Heart right ventricle (tissue), 16 donors: ENCODE measurements at regions of chr3 and their contacts with region 1.

Region 1: DNA sequence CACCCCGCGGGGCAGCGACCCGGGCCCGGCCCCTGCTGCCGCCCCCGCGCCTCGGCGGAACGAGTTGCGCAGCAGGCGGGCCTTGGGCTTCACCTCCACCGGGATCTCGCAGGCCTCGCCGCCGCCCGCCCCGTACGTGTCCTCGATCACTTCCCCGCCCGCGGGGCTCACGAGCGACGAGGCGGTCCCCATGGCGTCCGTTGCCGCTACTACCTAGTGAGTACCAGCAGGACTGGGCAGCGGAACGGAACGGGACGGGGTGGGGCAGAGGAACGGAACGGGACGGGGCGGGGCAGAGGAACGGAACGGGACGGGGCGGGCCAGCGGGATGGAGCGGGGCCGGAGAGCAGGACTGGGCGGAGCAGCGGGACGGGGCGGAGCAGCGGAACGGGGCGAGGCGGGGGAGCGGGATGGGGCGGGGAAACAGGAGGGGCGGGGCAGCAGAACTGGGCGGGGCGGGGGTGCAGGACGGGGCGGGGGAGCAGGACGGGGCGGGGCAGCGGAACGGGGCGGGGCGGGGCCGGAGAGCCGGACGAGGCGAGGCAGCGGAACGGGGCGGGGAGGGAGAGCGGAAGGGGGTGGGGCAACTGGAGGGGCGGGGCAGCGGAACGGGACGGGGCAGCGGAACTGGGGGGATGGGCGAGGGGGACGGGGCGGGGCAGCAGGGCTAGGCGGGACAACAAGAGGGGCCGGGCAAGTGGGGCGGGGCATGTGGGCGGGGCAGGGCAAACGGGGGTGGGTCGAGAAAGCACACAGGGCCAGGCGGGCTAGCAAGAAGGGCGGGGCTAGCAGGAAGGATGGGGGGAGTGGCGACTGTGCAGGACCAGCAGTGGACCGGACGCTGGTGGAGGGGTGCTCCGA is at the start of gene NPHP3:
- DNase-seq: peak; percentile 99
- ATAC-seq: peak; percentile 92 to 96 (median 94)
- H3K4me3 ChIP-seq: peak within 1 kb of the TSS; percentile 32 to 95 (median 84)
- H3K27ac ChIP-seq: peak within 1 kb of the TSS; percentile 88 to 99 (median 98)
- H3K4me1 ChIP-seq: peaks cover 9 to 48% (median 37%) of the 10 kb centered on the region in 9 donors
- H3K27me3 ChIP-seq: no peaks in the 10 kb centered on the region
- CTCF ChIP-seq: peak in 2 of 9 donors; percentile 10 to 15
- total RNA-seq, gene NPHP3: 6.6 to 13.7 (median 10.2) TPM

Region 2: DNA sequence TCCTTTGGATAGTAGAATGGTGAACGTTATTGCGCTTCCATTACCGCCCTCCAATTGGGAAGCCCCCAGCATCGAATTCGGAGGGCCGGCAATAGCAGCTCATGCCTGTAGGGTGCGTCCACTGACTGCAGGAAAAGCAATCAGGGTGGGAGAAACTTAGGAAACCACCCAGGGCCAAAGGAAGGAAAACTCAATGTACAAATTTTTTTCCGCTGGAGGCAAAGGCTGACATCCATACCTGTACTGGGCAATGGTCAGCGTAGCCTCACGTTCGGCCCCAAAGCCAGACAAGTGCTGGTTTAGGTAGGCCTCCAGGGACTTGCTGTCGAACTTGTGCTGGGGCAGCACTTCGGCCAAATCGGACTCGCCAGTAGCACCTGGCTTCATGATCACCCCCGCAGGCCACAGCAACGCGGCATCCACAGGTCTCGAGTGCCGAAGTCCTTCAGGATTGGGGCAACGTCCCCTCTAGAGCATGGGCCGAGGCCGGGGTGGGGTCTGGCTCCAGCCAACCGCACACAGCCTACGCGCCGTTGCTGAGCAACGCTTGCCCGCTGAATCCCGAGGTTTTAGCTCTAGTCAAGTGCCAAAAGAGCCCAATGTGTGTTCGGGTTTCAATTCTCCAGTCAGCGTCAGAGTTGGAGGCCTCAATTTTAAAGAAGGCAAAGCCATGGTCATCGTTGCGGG is 62.9 kb before region 1 on chr3 and contains the start of gene ACAD11:
- intact Hi-C with region 1: loop called in 4 of 10 experiments (anchors 5 to 10 kb)
- DNase-seq: peak; percentile 66 to 70
- ATAC-seq: peak; percentile 80 to 91 (median 86)
- H3K4me3 ChIP-seq: peak within 1 kb of the TSS; percentile 81 to 94 (median 90)
- H3K27ac ChIP-seq: peak within 1 kb of the TSS; percentile 80 to 97 (median 94)
- H3K4me1 ChIP-seq: peaks cover 2 to 85% (median 64%) of the 10 kb centered on the region in 9 donors
- H3K27me3 ChIP-seq: no peaks in the 10 kb centered on the region
- CTCF ChIP-seq: peak; percentile 31 to 78 (median 59)
- total RNA-seq, gene ACAD11: 11.8 to 31.2 (median 22.2) TPM

Region 3: DNA sequence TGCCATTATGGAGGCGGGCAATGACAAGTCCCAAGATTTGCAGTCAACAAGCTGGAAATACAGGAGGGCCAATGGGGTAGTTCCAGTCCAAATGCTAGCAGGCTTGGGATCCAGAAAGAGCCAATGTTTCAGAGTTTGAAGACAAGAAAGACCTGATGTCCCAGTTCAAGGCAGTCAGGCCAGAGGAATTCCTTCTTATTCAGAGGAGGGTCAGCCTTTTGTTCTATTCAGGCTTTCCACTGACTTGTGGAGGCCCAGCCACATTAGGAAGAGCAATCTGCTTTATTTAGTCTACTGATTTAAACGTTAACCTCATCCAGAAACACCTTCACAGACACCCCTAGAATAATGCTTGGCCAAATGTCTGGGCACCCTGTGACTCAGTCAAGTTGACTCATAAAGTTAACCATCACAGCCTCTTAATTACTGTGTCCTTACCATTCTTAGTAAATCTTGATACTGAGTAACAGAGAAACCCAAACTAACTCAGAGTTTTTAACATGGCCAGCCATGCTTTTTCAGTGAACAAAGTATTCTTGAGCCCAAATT is 50.8 kb after region 1 on chr3:
- intact Hi-C with region 1: no loop called
- DNase-seq: no peak
- ATAC-seq: no peak
- H3K4me3 ChIP-seq: no peak overlapping the region
- H3K27ac ChIP-seq: peak overlapping the region in 1 of 10 donors; percentile 40
- H3K4me1 ChIP-seq: no peaks in the 10 kb centered on the region
- H3K27me3 ChIP-seq: no peaks in the 10 kb centered on the region
- CTCF ChIP-seq: no peak

Region 4: GRCh38 chr3:133426721-133427120 is 704.3 kb after region 1 on chr3:
- intact Hi-C with region 1: loop called in 5 of 10 experiments (anchors 2 to 5 kb)
- DNase-seq: no peak
- ATAC-seq: no peak
- H3K4me3 ChIP-seq: no peak overlapping the region
- H3K27ac ChIP-seq: no peak overlapping the region
- H3K4me1 ChIP-seq: peaks cover 0 to 5% (median 0%) of the 10 kb centered on the region in 9 donors
- H3K27me3 ChIP-seq: peaks cover 0 to 25% (median 13%) of the 10 kb centered on the region in 7 donors
- CTCF ChIP-seq: no peak

Region 5: DNA sequence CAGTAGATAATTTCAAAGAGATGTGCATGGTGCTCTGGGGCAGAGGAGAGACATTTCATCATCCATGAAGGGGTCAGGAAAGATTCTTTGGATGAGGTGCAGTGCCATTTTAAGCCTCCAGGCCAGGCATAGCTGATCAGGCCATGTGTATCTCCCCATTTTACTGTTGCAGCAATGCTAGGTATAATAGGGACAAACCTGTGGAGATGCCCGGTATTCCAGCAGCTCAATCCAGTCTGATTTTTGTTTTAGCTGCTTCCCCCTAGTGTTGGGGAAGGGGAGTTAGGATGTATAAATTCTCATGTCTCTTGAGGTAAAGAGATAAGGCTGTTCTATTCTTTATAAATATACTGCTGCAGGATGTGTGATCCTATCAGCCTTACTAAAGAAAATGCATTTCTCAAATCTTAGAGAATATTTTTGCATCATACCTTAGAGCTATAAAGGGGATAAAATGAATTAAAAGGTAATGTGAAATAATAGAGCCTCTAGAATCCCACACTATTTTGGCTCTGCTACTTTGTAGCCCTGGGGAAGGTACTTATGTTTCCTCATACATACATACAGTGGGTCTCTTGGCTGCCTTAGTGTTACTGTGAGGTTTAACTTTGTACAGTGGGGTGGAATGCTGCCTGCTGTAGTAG is 856.3 kb after region 1 on chr3:
- intact Hi-C with region 1: loop called in 9 of 10 experiments (anchors 2 to 10 kb)
- DNase-seq: no peak
- ATAC-seq: no peak
- H3K4me3 ChIP-seq: no peak overlapping the region
- H3K27ac ChIP-seq: no peak overlapping the region
- H3K4me1 ChIP-seq: peaks cover 10 to 67% (median 61%) of the 10 kb centered on the region in 9 donors
- H3K27me3 ChIP-seq: no peaks in the 10 kb centered on the region
- CTCF ChIP-seq: peak in 8 of 9 donors; percentile 20 to 63 (median 44)

Region 6: DNA sequence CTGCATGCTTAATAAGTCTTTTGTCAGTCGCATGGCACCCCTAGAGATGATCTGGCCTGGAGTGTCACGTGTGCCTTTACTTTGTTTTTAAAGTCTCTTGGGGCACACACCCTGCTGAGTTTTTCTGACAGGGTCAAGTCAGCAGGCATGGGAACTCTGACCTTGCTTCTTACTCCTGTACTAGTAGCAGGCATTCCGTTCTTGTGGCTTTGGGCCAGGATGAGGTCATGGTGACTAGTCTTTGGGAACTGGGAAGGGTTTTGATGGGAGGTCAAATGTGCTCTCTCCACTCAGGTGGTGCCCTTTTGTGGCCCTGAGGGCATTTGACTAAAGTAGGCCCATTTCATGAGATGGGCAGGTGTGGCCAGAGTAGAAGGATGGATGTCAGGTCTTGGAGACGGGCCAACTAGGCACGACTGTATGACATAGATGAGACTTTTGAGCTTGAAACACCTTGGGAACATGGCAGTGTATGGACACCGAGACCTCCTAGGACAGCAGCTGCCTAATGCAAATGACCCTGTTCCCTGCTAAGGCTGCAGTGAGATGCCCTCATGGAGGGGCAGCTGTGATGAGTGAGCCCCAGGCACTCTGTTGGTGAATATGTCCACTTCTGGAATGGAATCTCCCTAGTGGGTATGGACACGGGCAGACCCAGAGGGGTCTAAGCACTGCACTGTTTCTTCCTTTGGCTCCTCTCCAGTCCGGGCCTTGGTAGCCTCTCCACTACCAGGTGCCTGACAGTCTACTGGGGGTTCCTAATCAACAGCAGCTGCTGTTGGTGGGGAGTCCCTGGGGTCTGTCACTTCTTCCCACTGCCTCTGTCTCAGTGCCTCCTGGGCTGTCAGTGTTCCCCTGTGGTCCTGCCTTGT is 1099.6 kb after region 1 on chr3:
- intact Hi-C with region 1: loop called in 3 of 10 experiments (anchors 5 to 10 kb)
- DNase-seq: peak in 1 of 2 donors; percentile 87
- ATAC-seq: peak in 7 of 8 donors; percentile 35 to 83 (median 65)
- H3K4me3 ChIP-seq: no peak overlapping the region
- H3K27ac ChIP-seq: peak overlapping the region in 1 of 10 donors; percentile 58
- H3K4me1 ChIP-seq: peaks cover 0 to 17% (median 5%) of the 10 kb centered on the region in 9 donors
- H3K27me3 ChIP-seq: no peaks in the 10 kb centered on the region
- CTCF ChIP-seq: peak in 5 of 9 donors; percentile 28 to 62 (median 43)